ENCODE measurements at regions of chr10 and their contacts with region 1.

Region 1: GRCh38 chr10:78424719-78425118 is 391.1 kb downstream of the RPS24 start:
- DNase-seq: peak; percentile 58
- H3K4me3 Mint-ChIP-seq: no peak overlapping the region
- H3K27ac Mint-ChIP-seq: no peak overlapping the region
- H3K4me1 Mint-ChIP-seq: no peaks in the 10 kb centered on the region
- H3K27me3 Mint-ChIP-seq: peaks cover 25% of the 10 kb centered on the region

Region 2: GRCh38 chr10:78383376-78384048 is 41.2 kb before region 1 on chr10:
- intact Hi-C with region 1: no loop called
- DNase-seq: no peak
- H3K4me3 Mint-ChIP-seq: no peak overlapping the region
- H3K27ac Mint-ChIP-seq: no peak overlapping the region
- H3K4me1 Mint-ChIP-seq: no peaks in the 10 kb centered on the region
- H3K27me3 Mint-ChIP-seq: peaks cover 3% of the 10 kb centered on the region

Region 3: GRCh38 chr10:78657163-78657861 is 232.6 kb after region 1 on chr10:
- intact Hi-C with region 1: loop called (anchors 5 kb)
- DNase-seq: peak; percentile 91
- H3K4me3 Mint-ChIP-seq: no peak overlapping the region
- H3K27ac Mint-ChIP-seq: no peak overlapping the region
- H3K4me1 Mint-ChIP-seq: no peaks in the 10 kb centered on the region
- H3K27me3 Mint-ChIP-seq: peaks cover 4% of the 10 kb centered on the region

Measured in activated CD4-positive, alpha-beta T cell treated with anti-CD3 and anti-CD28 coated beads, Interleukin-2, amount 10 ng/mL, durations not matched to agents 24 days and 14 days (primary cell).